Prostate gland (tissue), 2 donors: ENCODE measurements at regions of chr9 and their contacts with region 1.

Region 1: DNA sequence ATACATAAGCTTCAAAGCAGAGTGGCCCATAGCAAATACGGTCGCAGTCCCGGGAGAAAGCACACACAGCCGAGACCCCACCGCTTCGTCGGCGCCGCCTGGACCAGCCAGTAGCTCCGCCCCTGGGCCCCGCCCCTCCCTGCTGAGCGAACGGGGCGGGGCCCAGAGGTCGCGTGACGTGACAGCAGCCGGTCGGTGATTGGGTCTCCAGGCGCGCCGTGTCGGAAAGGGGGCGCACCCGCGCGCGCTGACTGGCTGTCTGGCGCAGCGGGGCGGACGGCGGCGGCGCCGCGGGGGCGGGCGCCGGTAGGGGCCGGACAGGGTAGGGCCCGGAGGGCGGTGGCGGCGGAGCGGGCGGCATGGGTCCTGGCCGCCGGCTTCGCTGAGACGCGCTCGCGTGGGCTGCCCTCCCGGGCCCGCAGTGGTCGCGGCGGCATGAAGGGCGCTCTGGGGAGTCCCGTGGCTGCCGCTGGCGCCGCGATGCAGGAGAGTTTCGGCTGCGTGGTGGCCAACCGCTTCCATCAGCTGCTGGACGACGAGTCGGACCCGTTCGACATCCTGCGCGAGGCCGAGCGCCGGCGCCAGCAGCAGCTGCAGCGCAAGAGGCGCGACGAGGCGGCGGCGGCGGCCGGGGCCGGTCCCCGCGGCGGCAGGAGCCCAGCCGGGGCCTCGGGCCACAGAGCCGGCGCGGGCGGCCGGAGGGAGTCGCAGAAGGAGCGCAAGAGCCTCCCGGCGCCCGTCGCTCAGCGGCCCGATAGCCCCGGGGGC is at the start of gene HABP4:
- DNase-seq: peak; percentile 97
- H3K4me3 ChIP-seq: peak within 1 kb of the TSS; percentile 68 to 69
- H3K27ac ChIP-seq: peak within 1 kb of the TSS; percentile 81 to 85
- H3K4me1 ChIP-seq: no peaks in the 10 kb centered on the region
- H3K27me3 ChIP-seq: no peaks in the 10 kb centered on the region
- CTCF ChIP-seq: peak in 2 of 4 experiments; percentile 41 to 49
- POLR2A ChIP-seq: peak; percentile 86
- total RNA-seq, gene HABP4: 13.5 to 24.3 TPM

Region 2: GRCh38 chr9:96418074-96418809 is 31.8 kb before region 1 on chr9 and contains the start of gene ZNF367:
- intact Hi-C with region 1: loop called (anchors 5 kb)
- DNase-seq: peak; percentile 97
- H3K4me3 ChIP-seq: peak within 1 kb of the TSS; percentile 75 to 77
- H3K27ac ChIP-seq: peak within 1 kb of the TSS; percentile 97 to 99
- H3K4me1 ChIP-seq: peaks cover 5% of the 10 kb centered on the region
- H3K27me3 ChIP-seq: no peaks in the 10 kb centered on the region
- CTCF ChIP-seq: no peak
- POLR2A ChIP-seq: peak; percentile 34
- total RNA-seq, gene ZNF367: 2.9 to 5.5 TPM

Region 3: DNA sequence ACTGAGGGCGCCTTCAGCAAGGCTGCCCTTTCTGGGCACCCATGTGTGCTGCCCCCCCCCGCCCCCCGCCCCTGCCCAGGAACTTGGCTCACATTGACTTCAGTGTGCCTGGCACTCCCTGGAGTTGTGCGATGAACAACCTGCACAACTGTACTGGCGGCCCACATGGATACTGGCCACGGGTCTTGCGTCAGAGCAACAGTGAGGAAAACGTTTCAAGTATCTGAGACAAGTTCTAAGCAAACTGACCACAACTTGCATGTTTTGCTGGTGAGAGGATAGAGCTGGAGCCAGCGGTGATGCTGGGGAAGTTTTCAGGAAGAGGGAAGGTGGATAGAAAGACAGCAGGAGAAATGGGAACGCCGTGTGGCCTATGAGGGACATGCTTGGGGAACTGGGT is 45.3 kb after region 1 on chr9:
- intact Hi-C with region 1: no loop called
- DNase-seq: no peak
- H3K4me3 ChIP-seq: no peak overlapping the region
- H3K27ac ChIP-seq: no peak overlapping the region
- H3K4me1 ChIP-seq: no peaks in the 10 kb centered on the region
- H3K27me3 ChIP-seq: no peaks in the 10 kb centered on the region
- CTCF ChIP-seq: no peak
- POLR2A ChIP-seq: no peak

Region 4: GRCh38 chr9:96566498-96567207 is 116.6 kb after region 1 on chr9:
- intact Hi-C with region 1: loop called (anchors 5 kb)
- DNase-seq: peak; percentile 69
- H3K4me3 ChIP-seq: peak overlapping the region; percentile 57 to 67
- H3K27ac ChIP-seq: peak overlapping the region; percentile 88 to 91
- H3K4me1 ChIP-seq: peaks cover 6% of the 10 kb centered on the region
- H3K27me3 ChIP-seq: no peaks in the 10 kb centered on the region
- CTCF ChIP-seq: peak in 3 of 4 experiments; percentile 54 to 70 (median 61)
- POLR2A ChIP-seq: no peak

Region 5: DNA sequence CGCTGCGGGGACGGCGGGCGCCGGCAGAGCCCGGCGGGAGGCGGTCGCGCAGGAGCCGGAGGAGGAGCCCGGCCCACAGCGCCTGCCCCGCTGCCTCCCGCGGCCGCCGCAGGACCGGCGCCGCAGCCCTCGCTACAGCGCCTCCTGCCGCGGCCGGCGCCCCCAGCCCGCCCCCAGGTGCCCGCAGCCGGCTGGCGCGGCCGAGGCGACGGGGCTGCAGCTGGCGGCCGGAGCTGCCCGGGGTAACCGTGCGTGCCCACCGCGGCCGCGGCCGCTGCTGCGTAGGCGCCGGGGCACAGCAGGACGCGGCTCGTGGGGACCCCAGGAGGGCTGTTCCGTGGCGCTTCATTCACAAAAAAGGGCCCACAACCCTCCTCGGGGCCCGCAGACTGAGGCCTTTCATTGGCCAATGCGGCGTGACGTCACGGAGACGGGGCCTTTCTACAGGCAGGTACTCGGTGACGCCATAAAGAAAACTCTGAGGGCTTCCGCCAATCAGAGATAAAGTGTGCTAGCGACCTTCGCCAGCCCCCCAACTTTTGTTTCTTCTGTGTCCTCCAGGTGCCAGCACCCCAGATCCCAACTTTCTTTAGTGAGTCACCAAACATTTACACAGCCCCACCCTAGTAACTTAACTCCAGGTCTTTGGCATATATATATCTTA is 169.6 kb after region 1 on chr9 and contains the start of gene CDC14B:
- intact Hi-C with region 1: loop called (anchors 5 kb)
- DNase-seq: peak; percentile 96
- H3K4me3 ChIP-seq: peak within 1 kb of the TSS; percentile 69 to 78
- H3K27ac ChIP-seq: peak within 1 kb of the TSS; percentile 88 to 92
- H3K4me1 ChIP-seq: no peaks in the 10 kb centered on the region
- H3K27me3 ChIP-seq: no peaks in the 10 kb centered on the region
- CTCF ChIP-seq: peak in 2 of 4 experiments; percentile 15 to 40
- POLR2A ChIP-seq: peak; percentile 62
- total RNA-seq, gene CDC14B: 27.0 to 34.7 TPM

Region 6: GRCh38 chr9:96654443-96655197 is 204.6 kb after region 1 on chr9:
- intact Hi-C with region 1: loop called (anchors 5 kb)
- DNase-seq: peak; percentile 57
- H3K4me3 ChIP-seq: peak overlapping the region; percentile 68 to 73
- H3K27ac ChIP-seq: peak overlapping the region; percentile 93 to 95
- H3K4me1 ChIP-seq: no peaks in the 10 kb centered on the region
- H3K27me3 ChIP-seq: no peaks in the 10 kb centered on the region
- CTCF ChIP-seq: peak in 1 of 4 experiments; percentile 43
- POLR2A ChIP-seq: no peak

Region 7: DNA sequence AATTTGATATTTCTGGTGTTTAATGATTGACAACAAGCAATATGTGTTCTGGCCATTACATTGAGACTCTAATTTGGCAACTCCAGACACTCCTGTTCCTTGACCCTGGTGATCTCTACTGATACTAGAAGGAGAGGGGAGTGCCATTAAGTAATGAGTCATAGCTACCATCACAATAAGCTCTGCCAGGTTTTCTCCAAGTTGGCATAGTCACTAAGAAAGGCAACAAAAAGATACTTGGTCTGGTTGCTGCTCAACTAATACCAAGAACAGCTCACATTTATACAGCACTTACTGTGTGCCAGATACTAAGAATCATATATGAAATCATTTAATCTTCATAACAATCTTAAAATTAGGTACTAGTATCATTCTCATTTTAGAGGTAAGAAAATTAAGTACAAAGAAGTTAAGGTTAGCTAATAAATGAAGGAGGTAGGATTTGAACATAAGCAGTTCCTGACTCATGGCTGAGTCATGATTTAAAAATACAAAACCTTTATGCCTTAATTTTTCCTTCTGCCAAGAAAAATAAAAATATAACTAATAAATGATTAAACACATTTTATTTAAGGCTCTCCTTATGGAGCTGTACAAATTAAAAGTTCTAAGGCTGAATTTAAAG is 225.0 kb after region 1 on chr9:
- intact Hi-C with region 1: no loop called
- DNase-seq: no peak
- H3K4me3 ChIP-seq: no peak overlapping the region
- H3K27ac ChIP-seq: no peak overlapping the region
- H3K4me1 ChIP-seq: no peaks in the 10 kb centered on the region
- H3K27me3 ChIP-seq: no peaks in the 10 kb centered on the region
- CTCF ChIP-seq: no peak
- POLR2A ChIP-seq: no peak